ENCODE measurements at regions of chr2 and their contacts with region 1.

Region 1: GRCh38 chr2:75614056-75614710 is 32.4 kb upstream of the MRPL19 start:
- DNase-seq: no peak
- ATAC-seq: no peak
- H3K4me3 ChIP-seq: no peak overlapping the region
- H3K27ac ChIP-seq: no peak overlapping the region
- H3K4me1 ChIP-seq: peaks cover 5% of the 10 kb centered on the region
- H3K27me3 ChIP-seq: no peaks in the 10 kb centered on the region
- CTCF ChIP-seq: no peak
- POLR2A ChIP-seq: no peak

Region 2: DNA sequence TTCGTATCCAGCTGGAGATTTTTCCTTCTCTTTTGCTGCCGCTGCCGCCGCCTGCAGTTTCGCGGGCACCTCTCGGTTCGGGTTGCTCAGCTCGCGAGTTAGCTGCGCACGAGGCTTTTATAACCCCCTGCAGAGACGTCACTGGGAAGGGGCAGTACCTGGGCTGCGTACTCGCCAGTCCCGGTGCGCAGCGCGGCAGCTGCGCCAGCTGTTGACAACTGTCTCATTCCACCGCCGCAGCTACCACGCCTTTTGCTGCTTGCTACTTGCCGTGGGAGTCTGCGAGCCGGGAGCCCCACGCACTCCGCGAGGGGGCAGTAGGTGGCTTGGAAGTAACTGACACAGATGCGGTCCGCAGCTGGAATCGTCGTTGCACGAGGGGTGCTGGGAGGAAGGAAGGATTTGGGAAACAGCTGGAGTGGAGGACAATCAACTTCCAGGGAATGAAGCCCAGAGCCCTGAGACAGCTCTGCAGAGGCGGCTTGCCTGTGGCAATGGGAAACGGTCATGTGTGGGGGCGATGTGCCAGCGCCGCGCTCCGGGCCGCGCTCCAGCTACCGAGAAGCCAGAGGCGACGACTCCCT is 414.7 kb before region 1 on chr2 and contains the start of gene TACR1:
- intact Hi-C with region 1: no loop called
- DNase-seq: peak; percentile 62 to 80 (median 71)
- ATAC-seq: peak; percentile 70
- H3K4me3 ChIP-seq: peak within 1 kb of the TSS; percentile 14 to 17
- H3K27ac ChIP-seq: no peak within 1 kb of the TSS
- H3K4me1 ChIP-seq: peaks cover 22% of the 10 kb centered on the region
- H3K27me3 ChIP-seq: no peaks in the 10 kb centered on the region
- CTCF ChIP-seq: peak in 6 of 7 experiments; percentile 16 to 53 (median 32)
- POLR2A ChIP-seq: peak in 1 of 3 donors; percentile 18
- total RNA-seq, gene TACR1: 0.52 TPM in 1 of 2 donors, not detected in the other

Region 3: GRCh38 chr2:75466708-75467311 is 147.4 kb before region 1 on chr2:
- intact Hi-C with region 1: loop called (anchors 5 kb)
- DNase-seq: peak; percentile 43 to 72 (median 66)
- ATAC-seq: no peak
- H3K4me3 ChIP-seq: no peak overlapping the region
- H3K27ac ChIP-seq: no peak overlapping the region
- H3K4me1 ChIP-seq: no peaks in the 10 kb centered on the region
- H3K27me3 ChIP-seq: no peaks in the 10 kb centered on the region
- CTCF ChIP-seq: peak; percentile 24 to 60 (median 42)
- POLR2A ChIP-seq: no peak